ENCODE measurements at regions of chr3 and their contacts with region 1.

Region 1: GRCh38 chr3:114336122-114336697 is 42.4 kb downstream of the TIGIT start:
- DNase-seq: no peak
- H3K4me3 Mint-ChIP-seq: no peak overlapping the region
- H3K27ac Mint-ChIP-seq: no peak overlapping the region
- H3K4me1 Mint-ChIP-seq: no peaks in the 10 kb centered on the region
- H3K27me3 Mint-ChIP-seq: no peaks in the 10 kb centered on the region
- CTCF ChIP-seq: peak; percentile 39

Region 2: DNA sequence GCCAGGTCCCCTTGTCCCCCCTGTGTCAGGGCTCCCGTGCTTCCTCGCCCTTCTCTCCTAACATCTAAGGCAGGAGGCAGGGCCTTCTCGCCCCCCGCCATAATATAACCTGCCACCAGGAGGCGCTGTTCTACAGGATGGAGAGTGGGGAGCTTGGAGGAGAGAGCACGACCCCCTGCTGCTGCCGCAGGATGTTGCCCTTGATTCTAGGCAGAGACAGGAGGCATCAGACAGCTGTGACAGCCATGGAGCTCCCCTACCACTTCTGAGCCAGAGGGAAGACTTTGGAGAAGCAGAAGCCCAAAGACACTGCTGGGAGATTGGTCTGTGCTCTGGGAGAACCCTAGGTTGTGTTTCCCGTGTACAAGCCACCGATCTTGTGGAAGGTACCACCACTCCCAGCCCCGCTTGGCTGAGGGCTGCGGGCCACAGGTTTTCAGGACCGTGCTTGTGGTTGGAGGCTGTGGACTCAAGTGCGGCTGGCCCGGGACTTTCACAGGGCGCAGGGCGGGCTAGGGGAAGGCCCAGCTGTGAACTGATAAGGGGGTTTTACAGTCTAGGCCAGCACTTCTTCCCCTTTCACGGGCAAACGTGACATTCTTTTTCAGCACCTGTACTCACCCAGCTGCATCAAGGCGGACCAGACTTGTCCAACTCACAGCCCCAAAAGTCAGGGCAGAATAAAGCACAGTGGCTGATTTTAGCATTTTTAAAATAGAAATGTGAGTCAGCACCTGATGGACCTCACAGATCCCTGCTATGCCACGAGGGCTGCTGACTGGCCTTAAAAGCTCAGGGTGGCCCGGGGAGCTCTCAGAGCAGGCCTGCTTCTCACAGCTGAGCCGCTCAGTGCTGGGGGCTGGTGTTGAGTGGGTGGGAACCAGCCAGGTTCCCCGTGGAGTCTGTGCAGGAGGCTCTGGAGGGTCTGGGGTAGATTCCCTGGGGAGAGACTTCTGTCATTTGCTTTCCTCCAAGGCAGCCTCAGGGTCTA is 45.0 kb before region 1 on chr3:
- CTCF ChIA-PET with region 1: no interaction called
- intact Hi-C with region 1: loop called (anchors 1 kb)
- DNase-seq: peak; percentile 81
- H3K4me3 Mint-ChIP-seq: no peak overlapping the region
- H3K27ac Mint-ChIP-seq: no peak overlapping the region
- H3K4me1 Mint-ChIP-seq: no peaks in the 10 kb centered on the region
- H3K27me3 Mint-ChIP-seq: no peaks in the 10 kb centered on the region
- CTCF ChIP-seq: peak; percentile 86

Measured in Calu3 (cell line).